ENCODE measurements at regions of chr6 and their contacts with region 1.

Region 1: GRCh38 chr6:24818346-24818745 is 19.6 kb upstream of the ARMH2 start:
- DNase-seq: no peak
- CTCF ChIP-seq: no peak

Region 2: DNA sequence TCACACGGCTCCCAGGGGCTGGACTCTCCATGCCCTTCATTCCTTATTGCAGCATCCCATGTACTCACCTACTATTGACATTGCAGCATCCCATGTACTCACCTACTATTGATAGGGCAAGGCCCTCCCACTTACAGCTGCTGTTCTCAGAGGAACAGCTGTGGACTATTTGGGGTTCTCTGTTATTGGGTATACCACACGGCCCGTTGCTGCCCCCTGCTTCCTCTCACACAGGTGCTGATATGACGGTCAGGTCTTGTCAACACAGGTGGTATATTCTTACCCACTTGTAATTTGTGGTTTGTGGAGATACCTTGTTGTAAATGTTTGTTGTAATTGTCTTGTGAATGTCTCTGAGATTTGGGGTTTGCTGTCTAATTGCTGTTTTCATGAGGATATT is 304.7 kb before region 1 on chr6:
- CTCF ChIA-PET with region 1: no interaction called
- POLR2A ChIA-PET with region 1: no interaction called
- DNase-seq: no peak
- CTCF ChIP-seq: peak; percentile 0

Region 3: GRCh38 chr6:24802271-24803059 is 15.9 kb before region 1 on chr6:
- CTCF ChIA-PET with region 1: interaction called, 16 read pairs
- POLR2A ChIA-PET with region 1: no interaction called
- DNase-seq: no peak
- CTCF ChIP-seq: no peak

Region 4: DNA sequence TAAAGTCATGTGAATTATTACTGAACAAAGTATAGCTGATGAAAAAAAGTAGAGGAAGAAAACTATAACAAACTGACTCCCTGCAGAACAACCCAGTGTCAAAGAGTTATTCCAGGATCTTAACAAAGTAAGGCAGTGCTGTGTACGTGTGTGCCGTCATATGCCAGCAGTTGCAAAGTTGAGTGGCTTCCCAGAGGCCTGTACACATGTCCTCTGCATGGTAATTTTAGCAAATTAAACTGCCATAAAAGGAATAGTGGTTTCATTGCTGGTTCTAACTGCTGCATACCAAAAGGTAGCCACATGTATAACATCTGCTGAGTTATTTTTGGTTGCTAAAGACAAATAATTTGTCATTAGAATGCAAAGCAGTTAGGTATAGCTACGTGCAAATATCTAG is 72.7 kb after region 1 on chr6:
- CTCF ChIA-PET with region 1: no interaction called
- POLR2A ChIA-PET with region 1: no interaction called
- DNase-seq: no peak
- CTCF ChIP-seq: no peak